ENCODE measurements at regions of chr2 and their contacts with region 1.

Region 1: GRCh38 chr2:231800493-231801091 is 14.3 kb downstream of the COPS7B start:
- DNase-seq: peak; percentile 51
- H3K4me3 ChIP-seq: no peak overlapping the region
- H3K27ac ChIP-seq: no peak overlapping the region
- H3K4me1 ChIP-seq: no peaks in the 10 kb centered on the region
- H3K27me3 ChIP-seq: no peaks in the 10 kb centered on the region
- CTCF ChIP-seq: peak; percentile 68 to 83
- POLR2A ChIP-seq: no peak

Region 2: GRCh38 chr2:231334179-231334930 is 466.2 kb before region 1 on chr2:
- CTCF ChIA-PET with region 1: no interaction called
- POLR2A ChIA-PET with region 1: no interaction called
- dilution Hi-C with region 1: no loop called
- intact Hi-C with region 1: no loop called
- DNase-seq: no peak
- H3K4me3 ChIP-seq: no peak overlapping the region
- H3K27ac ChIP-seq: no peak overlapping the region
- H3K4me1 ChIP-seq: peaks cover 11% of the 10 kb centered on the region
- H3K27me3 ChIP-seq: no peaks in the 10 kb centered on the region
- CTCF ChIP-seq: no peak
- POLR2A ChIP-seq: no peak

Region 3: GRCh38 chr2:231765496-231765929 is 35.1 kb before region 1 on chr2:
- CTCF ChIA-PET with region 1: interaction called, 3 read pairs
- POLR2A ChIA-PET with region 1: interaction called, 10 read pairs
- dilution Hi-C with region 1: no loop called
- intact Hi-C with region 1: no loop called
- DNase-seq: no peak
- H3K4me3 ChIP-seq: no peak overlapping the region
- H3K27ac ChIP-seq: no peak overlapping the region
- H3K4me1 ChIP-seq: peaks cover 2% of the 10 kb centered on the region
- H3K27me3 ChIP-seq: no peaks in the 10 kb centered on the region
- CTCF ChIP-seq: no peak
- POLR2A ChIP-seq: no peak

Region 4: GRCh38 chr2:231810905-231811304 is 10.3 kb after region 1 on chr2:
- CTCF ChIA-PET with region 1: interaction called, 11 read pairs
- POLR2A ChIA-PET with region 1: no interaction called
- dilution Hi-C with region 1: no loop called
- intact Hi-C with region 1: no loop called
- DNase-seq: no peak
- H3K4me3 ChIP-seq: no peak overlapping the region
- H3K27ac ChIP-seq: no peak overlapping the region
- H3K4me1 ChIP-seq: no peaks in the 10 kb centered on the region
- H3K27me3 ChIP-seq: no peaks in the 10 kb centered on the region
- CTCF ChIP-seq: no peak
- POLR2A ChIP-seq: no peak